ENCODE measurements at regions of chr4 and their contacts with region 1.

Region 1: DNA sequence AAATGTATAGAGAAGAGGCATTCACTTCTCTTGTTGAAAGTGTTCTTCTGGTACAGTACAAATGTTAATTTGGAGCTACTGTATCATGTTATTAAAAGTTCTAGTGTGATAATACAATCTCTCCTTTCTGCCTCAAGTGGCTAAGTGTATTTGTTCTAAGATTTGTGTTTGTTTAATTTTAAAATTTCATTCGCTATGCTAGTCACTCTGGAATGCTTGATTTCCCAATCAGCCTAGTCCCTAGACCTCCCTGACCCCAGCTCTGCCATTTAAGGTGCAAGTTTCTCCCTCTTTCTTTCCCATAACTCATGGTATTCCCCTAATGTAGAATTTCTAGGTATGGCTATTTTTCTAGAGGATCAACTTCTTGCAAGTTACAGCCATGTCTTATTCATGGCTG is 817.4 kb downstream of the STIM2 start:
- DNase-seq: no peak
- ATAC-seq: no peak
- H3K4me3 ChIP-seq: no peak overlapping the region
- H3K27ac ChIP-seq: no peak overlapping the region
- H3K4me1 ChIP-seq: no peaks in the 10 kb centered on the region
- H3K27me3 ChIP-seq: no peaks in the 10 kb centered on the region
- CTCF ChIP-seq: no peak

Region 2: GRCh38 chr4:29009908-29010307 is 1331.9 kb after region 1 on chr4:
- CTCF ChIA-PET with region 1: no interaction called
- POLR2A ChIA-PET with region 1: interaction called, 24 read pairs
- intact Hi-C with region 1: no loop called
- DNase-seq: no peak
- ATAC-seq: no peak
- H3K4me3 ChIP-seq: no peak overlapping the region
- H3K27ac ChIP-seq: no peak overlapping the region
- H3K4me1 ChIP-seq: no peaks in the 10 kb centered on the region
- H3K27me3 ChIP-seq: no peaks in the 10 kb centered on the region
- CTCF ChIP-seq: no peak